MCF 10A (cell line): ENCODE measurements at regions of chr20 and their contacts with region 1.

Region 1: DNA sequence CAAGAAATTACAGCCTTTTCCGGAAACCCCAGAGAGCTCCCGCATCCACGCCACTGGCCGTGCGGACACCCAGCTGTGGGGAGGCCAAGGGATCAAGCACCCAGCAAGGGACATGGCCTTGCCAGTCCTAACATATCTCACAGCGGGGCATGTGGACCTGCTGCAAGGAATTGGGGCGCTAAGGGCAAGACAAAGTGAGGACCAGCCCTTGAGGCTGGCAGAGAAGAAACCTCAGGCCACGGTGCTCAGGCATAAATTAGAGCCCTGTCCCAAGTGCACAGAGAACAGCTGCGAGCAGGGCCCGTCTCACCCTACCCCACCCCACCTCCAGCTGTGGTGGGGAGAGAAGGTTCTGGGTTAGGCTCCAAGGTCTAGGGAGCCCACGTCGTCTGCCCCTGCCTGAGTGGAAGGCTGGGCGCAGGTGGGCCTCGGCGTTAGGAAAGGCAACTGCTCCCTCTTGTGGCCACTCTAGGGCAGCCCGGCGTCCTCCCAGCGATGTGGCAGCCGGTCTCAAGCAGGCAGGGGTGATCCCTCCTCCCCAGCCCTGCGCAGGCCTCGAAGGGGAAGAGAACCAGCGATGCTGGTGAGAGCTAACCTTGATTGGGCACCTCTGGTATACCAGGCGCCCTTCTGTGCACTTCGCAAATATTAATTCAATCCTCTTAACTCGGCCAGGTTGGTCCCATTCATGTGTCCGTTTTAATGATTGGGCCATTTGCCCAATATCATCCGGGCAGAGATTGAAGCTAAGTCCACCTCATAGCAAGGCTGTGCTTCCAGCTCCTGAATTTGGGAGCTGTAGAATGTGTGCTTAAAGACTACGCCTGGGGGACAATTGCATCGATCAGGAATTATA is 235.8 kb downstream of the NFATC2 start:
- DNase-seq: peak; percentile 73
- H3K4me3 Mint-ChIP-seq: no peak overlapping the region
- H3K27ac Mint-ChIP-seq: no peak overlapping the region
- H3K4me1 Mint-ChIP-seq: no peaks in the 10 kb centered on the region
- H3K27me3 Mint-ChIP-seq: no peaks in the 10 kb centered on the region
- CTCF ChIP-seq: peak; percentile 90

Region 2: GRCh38 chr20:50992733-50993457 is 313.8 kb before region 1 on chr20:
- CTCF ChIA-PET with region 1: interaction called, 810 read pairs
- POLR2A ChIA-PET with region 1: interaction called, 50 read pairs
- intact Hi-C with region 1: loop called (anchors 1 kb)
- DNase-seq: peak; percentile 77
- H3K4me3 Mint-ChIP-seq: no peak overlapping the region
- H3K27ac Mint-ChIP-seq: no peak overlapping the region
- H3K4me1 Mint-ChIP-seq: peaks cover 13% of the 10 kb centered on the region
- H3K27me3 Mint-ChIP-seq: no peaks in the 10 kb centered on the region
- CTCF ChIP-seq: peak; percentile 80

Region 3: GRCh38 chr20:51022803-51023630 is 283.7 kb before region 1 on chr20 and contains the start of gene KCNG1:
- CTCF ChIA-PET with region 1: interaction called, 39 read pairs
- POLR2A ChIA-PET with region 1: no interaction called
- intact Hi-C with region 1: no loop called
- DNase-seq: peak; percentile 77
- H3K4me3 Mint-ChIP-seq: peak within 1 kb of the TSS; percentile 71
- H3K27ac Mint-ChIP-seq: no peak within 1 kb of the TSS
- H3K4me1 Mint-ChIP-seq: peaks cover 15% of the 10 kb centered on the region
- H3K27me3 Mint-ChIP-seq: peaks cover 4% of the 10 kb centered on the region
- CTCF ChIP-seq: no peak
- total RNA-seq, gene KCNG1: 24.8 and 30.6 TPM in 2 replicates

Region 4: DNA sequence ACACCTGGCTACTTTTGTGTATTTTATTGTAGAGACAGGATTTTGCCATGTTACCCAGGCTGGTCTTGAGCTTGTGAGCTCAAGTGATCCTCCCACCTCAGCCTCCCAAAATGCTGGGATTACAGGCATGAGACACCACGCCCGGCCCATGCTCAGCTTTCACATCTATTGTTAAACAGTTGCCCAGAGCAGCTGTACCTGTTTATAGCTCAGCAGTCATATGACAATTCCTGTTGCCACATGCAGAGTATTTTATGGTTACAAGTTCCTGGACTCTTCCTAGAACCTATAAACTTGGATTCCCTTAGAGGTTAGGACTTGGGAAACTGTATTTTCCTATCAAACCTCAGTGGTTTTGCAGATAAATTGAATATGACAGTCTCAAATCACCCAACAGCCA is 95.5 kb before region 1 on chr20:
- CTCF ChIA-PET with region 1: interaction called, 11 read pairs
- POLR2A ChIA-PET with region 1: interaction called, 3 read pairs
- intact Hi-C with region 1: no loop called
- DNase-seq: peak; percentile 11
- H3K4me3 Mint-ChIP-seq: no peak overlapping the region
- H3K27ac Mint-ChIP-seq: no peak overlapping the region
- H3K4me1 Mint-ChIP-seq: peaks cover 6% of the 10 kb centered on the region
- H3K27me3 Mint-ChIP-seq: peaks cover 28% of the 10 kb centered on the region
- CTCF ChIP-seq: no peak

Region 5: DNA sequence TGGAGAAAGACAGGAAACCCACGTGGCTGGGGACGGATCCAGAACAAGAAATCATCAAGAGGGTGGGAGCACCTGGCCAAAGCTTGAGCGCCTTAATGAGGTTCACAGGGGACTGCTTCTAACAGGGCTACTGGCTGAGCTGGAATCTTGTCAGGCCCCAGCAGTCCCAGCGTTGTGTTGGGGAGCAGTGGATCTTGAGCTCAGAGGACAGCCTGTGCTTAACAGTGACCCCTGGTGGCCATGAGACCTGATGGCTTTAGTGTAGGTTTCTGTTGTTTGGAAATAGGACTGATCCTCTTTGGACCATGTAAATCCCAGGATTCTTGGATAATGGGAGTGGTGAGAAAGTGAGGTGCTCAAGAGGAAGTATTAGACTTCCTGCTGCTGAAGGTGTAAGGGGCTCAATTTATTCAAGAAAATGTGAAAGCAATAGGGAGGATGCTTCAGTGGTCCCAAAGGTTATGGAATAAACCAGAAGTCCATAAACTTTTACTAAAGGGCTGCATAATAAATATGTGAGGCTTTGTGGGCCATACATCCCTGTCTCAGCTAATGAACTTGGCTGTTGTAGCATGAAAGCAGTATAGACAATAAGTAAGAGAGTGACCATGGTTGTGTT is 19.6 kb after region 1 on chr20:
- CTCF ChIA-PET with region 1: interaction called, 142 read pairs
- POLR2A ChIA-PET with region 1: interaction called, 4 read pairs
- intact Hi-C with region 1: no loop called
- DNase-seq: peak; percentile 70
- H3K4me3 Mint-ChIP-seq: no peak overlapping the region
- H3K27ac Mint-ChIP-seq: peak overlapping the region; percentile 8
- H3K4me1 Mint-ChIP-seq: peaks cover 12% of the 10 kb centered on the region
- H3K27me3 Mint-ChIP-seq: no peaks in the 10 kb centered on the region
- CTCF ChIP-seq: peak; percentile 41

Region 6: DNA sequence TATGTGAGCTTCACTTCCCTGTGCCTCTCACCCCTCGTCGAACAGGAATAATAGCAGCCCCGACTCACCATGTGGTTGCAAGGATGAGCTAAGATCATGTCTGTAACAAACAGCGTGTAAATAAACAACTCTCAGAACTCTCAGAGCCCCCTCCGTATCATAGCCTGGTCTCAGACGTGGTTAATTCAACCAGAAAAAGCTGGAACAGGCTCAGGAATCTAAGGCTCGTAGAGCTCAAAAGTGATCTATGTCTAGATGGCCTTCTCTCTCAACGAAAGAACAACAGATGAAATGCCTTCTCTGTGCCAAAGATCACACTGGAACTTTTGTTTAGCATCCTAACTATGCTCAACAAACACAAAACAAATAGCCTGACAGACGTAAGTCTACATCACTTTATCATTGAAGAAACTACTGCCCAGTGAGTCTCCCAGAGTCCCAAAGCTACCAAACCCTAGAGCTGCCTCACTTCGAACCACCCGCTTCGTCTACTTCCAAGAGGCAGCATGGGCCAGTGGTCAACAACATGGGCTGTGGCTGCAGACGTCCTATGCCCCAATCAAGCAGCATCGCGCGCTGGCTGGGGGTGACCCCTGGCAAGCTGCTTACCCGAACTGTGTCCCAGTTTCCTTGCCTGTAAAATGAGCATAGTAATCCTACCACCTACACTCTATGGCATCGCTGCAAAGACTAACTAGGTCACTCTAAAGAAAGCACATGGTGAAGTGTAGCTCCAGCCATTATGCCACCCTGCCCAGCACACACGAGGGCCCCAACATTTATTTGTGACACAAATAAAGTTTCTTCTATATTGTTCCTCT is 200.7 kb after region 1 on chr20:
- CTCF ChIA-PET with region 1: no interaction called
- POLR2A ChIA-PET with region 1: no interaction called
- intact Hi-C with region 1: no loop called
- DNase-seq: no peak
- H3K4me3 Mint-ChIP-seq: no peak overlapping the region
- H3K27ac Mint-ChIP-seq: no peak overlapping the region
- H3K4me1 Mint-ChIP-seq: no peaks in the 10 kb centered on the region
- H3K27me3 Mint-ChIP-seq: peaks cover 24% of the 10 kb centered on the region
- CTCF ChIP-seq: no peak

Region 7: GRCh38 chr20:51595058-51595532 is 288.4 kb after region 1 on chr20:
- CTCF ChIA-PET with region 1: interaction called, 38 read pairs
- POLR2A ChIA-PET with region 1: no interaction called
- intact Hi-C with region 1: loop called (anchors 5 kb)
- DNase-seq: peak; percentile 86
- H3K4me3 Mint-ChIP-seq: no peak overlapping the region
- H3K27ac Mint-ChIP-seq: peak overlapping the region; percentile 61
- H3K4me1 Mint-ChIP-seq: peaks cover 6% of the 10 kb centered on the region
- H3K27me3 Mint-ChIP-seq: no peaks in the 10 kb centered on the region
- CTCF ChIP-seq: peak; percentile 92